Mammary epithelial cell (primary cell): ENCODE measurements at regions of chr13 and their contacts with region 1.

Region 1: GRCh38 chr13:29556742-29557141 is 38.7 kb downstream of the SLC7A1 start:
- DNase-seq: no peak
- H3K4me3 ChIP-seq: no peak overlapping the region
- H3K27ac ChIP-seq: no peak overlapping the region
- H3K4me1 ChIP-seq: peaks cover 2% of the 10 kb centered on the region
- H3K27me3 ChIP-seq: no peaks in the 10 kb centered on the region
- CTCF ChIP-seq: no peak

Region 2: DNA sequence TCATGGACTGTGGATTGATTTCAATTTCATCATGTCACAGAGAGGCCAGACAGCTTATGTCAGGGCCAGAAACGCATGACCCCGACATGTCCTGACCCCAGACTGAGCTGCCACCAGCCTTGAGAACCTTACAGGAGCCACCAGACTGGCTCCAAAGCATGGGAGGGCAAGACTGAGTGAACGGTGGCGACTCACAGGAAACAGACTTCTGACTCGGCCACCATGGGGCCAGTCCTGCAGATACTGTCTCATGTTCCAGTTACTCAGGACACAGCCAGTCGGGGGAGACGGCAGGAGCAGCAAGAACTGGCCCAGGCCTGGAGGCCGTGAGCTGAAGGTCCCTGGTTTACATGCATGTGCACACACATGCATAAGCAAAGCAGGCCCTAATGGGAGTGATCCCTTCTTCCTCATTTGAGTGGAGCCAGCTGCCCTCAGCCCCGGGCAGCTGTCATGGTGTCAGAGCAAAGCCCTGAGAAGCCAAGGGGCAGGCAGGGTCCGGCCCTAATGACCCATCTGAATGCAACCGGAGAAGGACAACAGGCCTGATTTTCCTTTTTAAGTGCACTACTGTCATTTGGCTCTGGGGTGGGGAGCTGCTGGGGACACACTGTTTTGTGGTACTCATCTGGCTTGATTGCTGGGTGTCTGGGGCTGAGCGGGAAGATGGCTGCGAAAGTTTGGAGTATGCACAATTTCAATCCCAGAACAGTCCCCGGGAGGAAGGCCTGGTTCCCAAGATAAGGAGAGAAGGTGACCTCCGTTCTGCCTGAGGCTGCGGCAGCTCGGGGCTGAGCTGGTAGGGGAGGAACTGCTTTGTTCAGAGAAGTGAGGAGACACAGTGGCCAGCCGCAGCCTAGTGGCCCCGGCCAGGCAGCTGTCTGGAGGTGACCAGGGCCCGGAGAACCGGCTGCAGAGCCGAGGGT is 43.1 kb before region 1 on chr13:
- CTCF ChIA-PET with region 1: no interaction called
- dilution Hi-C with region 1: loop called (anchors 5 kb)
- in situ Hi-C with region 1: no loop called
- intact Hi-C with region 1: no loop called
- DNase-seq: peak; percentile 10
- H3K4me3 ChIP-seq: no peak overlapping the region
- H3K27ac ChIP-seq: no peak overlapping the region
- H3K4me1 ChIP-seq: no peaks in the 10 kb centered on the region
- H3K27me3 ChIP-seq: no peaks in the 10 kb centered on the region
- CTCF ChIP-seq: no peak

Region 3: DNA sequence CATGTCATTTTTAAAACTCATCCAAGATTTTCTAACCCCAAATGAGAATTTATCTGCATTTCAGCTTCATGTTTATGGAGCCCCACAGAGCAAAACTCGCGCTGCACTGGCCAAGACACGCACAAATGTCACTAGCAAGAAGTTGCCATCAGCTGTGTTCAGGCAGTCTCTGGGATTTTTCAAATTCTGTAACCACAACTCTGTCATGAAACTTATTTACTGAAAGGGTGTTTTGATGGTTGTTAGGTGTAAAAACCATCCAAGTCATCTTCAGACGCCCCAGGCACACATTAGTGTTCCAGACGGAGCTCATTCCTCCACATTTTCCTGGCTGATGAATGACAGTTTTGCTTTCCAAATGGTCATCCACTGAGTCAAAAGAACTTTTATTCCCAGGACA is 24.6 kb before region 1 on chr13:
- CTCF ChIA-PET with region 1: no interaction called
- dilution Hi-C with region 1: no loop called
- in situ Hi-C with region 1: no loop called
- intact Hi-C with region 1: no loop called
- DNase-seq: no peak
- H3K4me3 ChIP-seq: no peak overlapping the region
- H3K27ac ChIP-seq: no peak overlapping the region
- H3K4me1 ChIP-seq: no peaks in the 10 kb centered on the region
- H3K27me3 ChIP-seq: no peaks in the 10 kb centered on the region
- CTCF ChIP-seq: no peak